ENCODE measurements at regions of chr10 and their contacts with region 1.

Region 1: GRCh38 chr10:109282510-109282909 is 640.8 kb downstream of the XPNPEP1 start:
- DNase-seq: peak in 1 of 2 experiments; percentile 12
- H3K4me3 ChIP-seq: no peak overlapping the region
- H3K4me3 Mint-ChIP-seq: no peak overlapping the region
- H3K27ac Mint-ChIP-seq: peak overlapping the region; percentile 50
- H3K4me1 ChIP-seq: peaks cover 28% of the 10 kb centered on the region
- H3K4me1 Mint-ChIP-seq: peaks cover 38% of the 10 kb centered on the region
- H3K27me3 ChIP-seq: no peaks in the 10 kb centered on the region
- H3K27me3 Mint-ChIP-seq: no peaks in the 10 kb centered on the region
- CTCF ChIP-seq: no peak

Region 2: GRCh38 chr10:108521762-108522492 is 760.6 kb before region 1 on chr10:
- CTCF ChIA-PET with region 1: no interaction called
- POLR2A ChIA-PET with region 1: no interaction called
- intact Hi-C with region 1: no loop called
- DNase-seq: no peak
- H3K4me3 ChIP-seq: no peak overlapping the region
- H3K4me3 Mint-ChIP-seq: no peak overlapping the region
- H3K27ac Mint-ChIP-seq: no peak overlapping the region
- H3K4me1 ChIP-seq: no peaks in the 10 kb centered on the region
- H3K4me1 Mint-ChIP-seq: no peaks in the 10 kb centered on the region
- H3K27me3 ChIP-seq: no peaks in the 10 kb centered on the region
- H3K27me3 Mint-ChIP-seq: peaks cover 3% of the 10 kb centered on the region
- CTCF ChIP-seq: no peak

Region 3: DNA sequence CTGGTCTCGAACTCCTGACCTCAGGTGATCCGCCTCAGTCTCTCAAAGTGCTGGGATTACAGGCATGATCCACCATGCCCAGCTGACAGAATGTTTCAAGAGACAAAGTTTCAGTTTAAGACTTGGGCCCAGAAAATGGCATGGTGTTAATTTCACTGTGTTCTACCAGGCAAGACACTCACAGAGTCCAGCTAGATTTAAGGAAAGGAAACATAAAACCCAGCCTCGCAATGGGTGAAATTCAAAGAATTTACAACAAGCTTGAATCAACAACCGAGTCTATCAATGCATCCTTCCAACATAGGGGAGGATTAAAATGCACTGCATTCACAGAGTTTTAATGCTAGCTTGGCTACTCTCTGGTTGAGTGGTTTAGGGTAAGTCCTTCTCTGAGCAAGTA is 123.2 kb before region 1 on chr10:
- CTCF ChIA-PET with region 1: no interaction called
- POLR2A ChIA-PET with region 1: no interaction called
- intact Hi-C with region 1: no loop called
- DNase-seq: no peak
- H3K4me3 ChIP-seq: no peak overlapping the region
- H3K4me3 Mint-ChIP-seq: no peak overlapping the region
- H3K27ac Mint-ChIP-seq: no peak overlapping the region
- H3K4me1 ChIP-seq: 0 out of 2 replicates have a peak, but pooled peaks cover 5% of the 10 kb centered on the region
- H3K4me1 Mint-ChIP-seq: peaks cover 9% of the 10 kb centered on the region
- H3K27me3 ChIP-seq: no peaks in the 10 kb centered on the region
- H3K27me3 Mint-ChIP-seq: no peaks in the 10 kb centered on the region
- CTCF ChIP-seq: no peak

Region 4: DNA sequence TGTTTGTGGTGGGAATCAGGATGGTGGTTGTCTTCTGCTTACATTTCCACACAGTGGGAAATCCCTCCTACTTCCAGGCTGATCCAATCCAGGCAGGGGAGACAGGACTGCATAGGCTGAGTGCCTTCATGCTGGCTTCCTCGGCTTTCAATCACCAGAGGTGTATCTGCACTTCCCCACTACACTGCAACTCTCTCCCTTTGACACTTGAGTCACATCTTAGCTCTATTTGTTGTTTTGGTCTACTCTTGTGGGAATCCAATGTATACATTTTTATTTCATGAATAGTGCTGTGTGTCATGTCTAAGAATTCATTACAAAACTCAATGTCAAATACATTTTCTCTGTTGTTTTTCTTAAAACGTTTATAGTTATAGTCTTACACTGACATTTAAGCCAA is 94.8 kb before region 1 on chr10:
- CTCF ChIA-PET with region 1: no interaction called
- POLR2A ChIA-PET with region 1: no interaction called
- intact Hi-C with region 1: no loop called
- DNase-seq: no peak
- H3K4me3 ChIP-seq: no peak overlapping the region
- H3K4me3 Mint-ChIP-seq: no peak overlapping the region
- H3K27ac Mint-ChIP-seq: no peak overlapping the region
- H3K4me1 ChIP-seq: no peaks in the 10 kb centered on the region; the same call in 1 of the 2 replicates
- H3K4me1 Mint-ChIP-seq: peaks cover 2% of the 10 kb centered on the region
- H3K27me3 ChIP-seq: no peaks in the 10 kb centered on the region
- H3K27me3 Mint-ChIP-seq: no peaks in the 10 kb centered on the region
- CTCF ChIP-seq: no peak

Region 5: DNA sequence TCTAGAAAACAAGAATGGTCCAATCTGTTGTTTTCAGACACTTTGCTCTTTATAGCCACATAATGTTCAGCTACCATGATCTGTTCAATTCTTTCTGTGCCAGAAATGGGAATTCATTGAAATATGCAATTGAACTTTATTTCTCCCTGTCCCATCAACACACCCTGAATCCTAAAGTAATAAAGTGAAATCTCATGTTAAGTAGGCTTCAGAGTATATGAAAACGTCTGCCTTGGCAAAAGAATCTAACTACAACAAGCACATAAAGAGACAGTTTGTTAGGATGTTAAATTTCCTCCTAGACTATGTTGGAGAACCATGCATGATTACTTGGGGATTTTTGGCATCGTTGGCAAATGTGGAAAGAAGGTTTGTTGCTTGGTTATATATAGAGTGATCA is 81.9 kb before region 1 on chr10:
- CTCF ChIA-PET with region 1: no interaction called
- POLR2A ChIA-PET with region 1: no interaction called
- intact Hi-C with region 1: loop called (anchors 2 kb)
- DNase-seq: no peak
- H3K4me3 ChIP-seq: no peak overlapping the region
- H3K4me3 Mint-ChIP-seq: no peak overlapping the region
- H3K27ac Mint-ChIP-seq: peak overlapping the region; percentile 74
- H3K4me1 ChIP-seq: peaks cover 24% of the 10 kb centered on the region
- H3K4me1 Mint-ChIP-seq: peaks cover 14% of the 10 kb centered on the region
- H3K27me3 ChIP-seq: no peaks in the 10 kb centered on the region
- H3K27me3 Mint-ChIP-seq: no peaks in the 10 kb centered on the region
- CTCF ChIP-seq: no peak

Region 6: GRCh38 chr10:109264004-109264403 is 18.5 kb before region 1 on chr10:
- CTCF ChIA-PET with region 1: no interaction called
- POLR2A ChIA-PET with region 1: no interaction called
- intact Hi-C with region 1: loop called (anchors 2 kb)
- DNase-seq: peak; percentile 41 to 71
- H3K4me3 ChIP-seq: no peak overlapping the region
- H3K4me3 Mint-ChIP-seq: no peak overlapping the region
- H3K27ac Mint-ChIP-seq: peak overlapping the region; percentile 77
- H3K4me1 ChIP-seq: peaks cover 25% of the 10 kb centered on the region
- H3K4me1 Mint-ChIP-seq: peaks cover 28% of the 10 kb centered on the region
- H3K27me3 ChIP-seq: no peaks in the 10 kb centered on the region
- H3K27me3 Mint-ChIP-seq: no peaks in the 10 kb centered on the region
- CTCF ChIP-seq: no peak

Region 7: DNA sequence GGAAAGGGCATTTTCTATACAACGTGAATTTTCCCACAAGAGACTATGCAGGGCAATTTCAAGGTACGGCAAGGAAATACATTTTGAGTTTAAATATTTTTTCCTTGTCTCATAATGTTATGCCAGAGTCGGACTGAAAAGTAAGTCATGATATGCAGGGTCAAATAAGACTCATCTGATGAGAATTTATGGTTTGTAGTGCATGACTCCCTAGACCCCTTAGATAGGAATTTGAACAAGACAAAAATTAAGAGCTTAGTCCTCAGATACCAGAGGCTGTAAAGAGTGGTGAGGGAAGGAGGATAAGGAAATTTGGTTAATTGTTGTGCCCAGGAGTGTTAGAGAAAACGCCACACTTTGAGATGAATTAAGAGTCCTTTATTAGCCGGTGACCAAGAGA is 24.2 kb after region 1 on chr10:
- CTCF ChIA-PET with region 1: no interaction called
- POLR2A ChIA-PET with region 1: no interaction called
- intact Hi-C with region 1: loop called (anchors 1 kb)
- DNase-seq: peak in 1 of 2 experiments; percentile 21
- H3K4me3 ChIP-seq: no peak overlapping the region
- H3K4me3 Mint-ChIP-seq: peak overlapping the region; percentile 61
- H3K27ac Mint-ChIP-seq: peak overlapping the region; percentile 73
- H3K4me1 ChIP-seq: peaks cover 64% of the 10 kb centered on the region
- H3K4me1 Mint-ChIP-seq: peaks cover 48% of the 10 kb centered on the region
- H3K27me3 ChIP-seq: no peaks in the 10 kb centered on the region
- H3K27me3 Mint-ChIP-seq: no peaks in the 10 kb centered on the region
- CTCF ChIP-seq: no peak

Measured in Caco-2 (cell line).